GM12878 (cell line): ENCODE measurements at regions of chr11 and their contacts with region 1.

Region 1: DNA sequence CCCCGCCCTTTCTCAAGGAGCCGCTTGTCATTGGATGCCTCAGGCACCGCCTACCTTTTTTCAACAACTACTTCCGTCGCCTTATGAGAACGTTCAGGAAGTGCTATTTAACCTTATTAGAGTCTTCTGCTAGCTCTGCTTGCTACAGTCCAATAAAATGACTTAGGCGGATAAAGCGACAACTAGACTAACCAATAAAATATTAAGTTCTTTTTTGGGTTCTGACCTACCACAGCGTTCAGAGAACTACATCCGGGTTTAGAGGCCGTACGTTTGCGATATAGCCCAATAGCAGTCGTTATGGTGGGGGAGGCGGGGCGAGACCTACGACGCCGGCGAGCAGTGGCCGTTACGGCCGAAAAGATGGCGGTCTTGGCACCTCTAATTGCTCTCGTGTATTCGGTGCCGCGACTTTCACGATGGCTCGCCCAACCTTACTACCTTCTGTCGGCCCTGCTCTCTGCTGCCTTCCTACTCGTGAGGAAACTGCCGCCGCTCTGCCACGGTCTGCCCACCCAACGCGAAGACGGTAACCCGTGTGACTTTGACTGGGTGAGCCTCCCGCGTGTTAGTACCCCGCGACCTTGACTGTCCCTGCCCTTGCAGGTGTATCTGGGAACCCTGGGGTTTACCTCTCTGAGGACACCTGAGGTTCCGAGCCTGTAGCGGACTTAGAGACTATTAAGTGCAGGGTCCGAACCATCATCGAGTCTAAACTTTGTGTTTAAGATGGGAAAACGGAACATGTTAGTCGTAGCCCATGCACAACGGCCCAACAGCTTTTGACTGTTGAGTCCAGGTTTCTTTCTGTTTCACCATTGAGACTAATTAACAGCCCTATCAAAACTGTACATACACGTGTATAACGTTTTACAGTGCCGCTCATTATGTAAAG is at the start of gene TMX2:
- DNase-seq: peak; percentile 99
- ATAC-seq: peak; percentile 95
- H3K4me3 ChIP-seq: peak within 1 kb of the TSS; percentile 97
- H3K27ac ChIP-seq: peak within 1 kb of the TSS; percentile 86
- H3K4me1 ChIP-seq: peaks cover 4% of the 10 kb centered on the region
- H3K27me3 ChIP-seq: no peaks in the 10 kb centered on the region
- CTCF ChIP-seq: no peak
- EP300 ChIP-seq: no peak
- POLR2A ChIP-seq: peak; percentile 96
- RAD21 ChIP-seq: no peak
- polyA plus RNA-seq, gene TMX2: 107 to 128 TPM

Region 2: GRCh38 chr11:57729479-57729878 is 17.0 kb after region 1 on chr11:
- CTCF ChIA-PET with region 1: interaction called, 5 read pairs
- POLR2A ChIA-PET with region 1: interaction called, 4 read pairs
- RAD21 ChIA-PET with region 1: interaction called, 3 read pairs
- SMC1A ChIA-PET with region 1: interaction called, 18 read pairs
- in situ Hi-C with region 1: no loop called
- intact Hi-C with region 1: no loop called
- DNase-seq: no peak
- ATAC-seq: peak; percentile 64
- H3K4me3 ChIP-seq: no peak overlapping the region
- H3K27ac ChIP-seq: peak overlapping the region; percentile 6; the same call in 1 of the 2 replicates
- H3K4me1 ChIP-seq: 0 out of 2 replicates have a peak, but pooled peaks cover 6% of the 10 kb centered on the region
- H3K27me3 ChIP-seq: no peaks in the 10 kb centered on the region
- CTCF ChIP-seq: no peak
- EP300 ChIP-seq: no peak
- POLR2A ChIP-seq: no peak
- RAD21 ChIP-seq: no peak